Activated CD4-positive, alpha-beta memory T cell treated with anti-CD3 and anti-CD28 coated beads for 36 hours (primary cell): ENCODE measurements at regions of chr18 and their contacts with region 1.

Region 1: DNA sequence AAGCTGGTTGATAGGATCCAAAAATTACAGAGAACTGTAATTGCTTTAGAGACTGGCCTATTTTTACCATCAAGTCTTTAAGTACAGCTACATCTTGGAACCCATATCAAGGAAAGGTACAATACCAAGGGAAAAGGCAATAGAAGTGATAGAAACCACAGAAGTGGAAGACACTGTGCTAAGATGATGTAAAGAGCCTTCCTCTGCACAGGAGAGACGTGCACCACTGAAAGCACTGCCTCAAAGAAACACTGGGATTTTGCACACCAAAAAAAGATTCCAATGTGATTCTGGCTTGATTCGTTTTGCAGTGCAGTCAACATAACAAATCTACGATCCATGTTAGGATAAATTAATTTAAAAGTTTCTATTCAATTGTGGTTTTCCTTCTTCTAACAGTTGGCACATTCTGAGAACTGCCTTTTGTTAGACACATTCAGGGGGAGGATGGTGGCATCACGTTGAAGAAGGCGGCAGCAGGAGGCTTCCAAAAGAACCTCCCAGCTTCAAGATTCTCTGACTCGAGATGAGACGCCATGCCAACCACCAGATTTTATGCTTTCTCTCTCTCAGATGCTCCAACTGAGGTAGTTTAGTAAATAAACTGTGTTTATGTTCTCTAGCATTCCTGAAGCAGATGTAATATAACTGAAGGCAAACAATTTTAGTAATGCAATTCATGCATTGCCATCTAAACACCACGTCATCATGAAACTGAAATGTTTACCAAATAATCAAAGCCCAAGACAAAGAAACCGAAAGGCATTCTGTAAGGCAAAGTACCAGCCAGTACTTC is 102.9 kb downstream of the BCL2 start:
- DNase-seq: peak; percentile 50
- H3K4me3 Mint-ChIP-seq: peak overlapping the region; percentile 64
- H3K27ac Mint-ChIP-seq: peak overlapping the region; percentile 93
- H3K4me1 Mint-ChIP-seq: peaks cover 95% of the 10 kb centered on the region
- H3K27me3 Mint-ChIP-seq: no peaks in the 10 kb centered on the region

Region 2: GRCh38 chr18:62186774-62187542 is 1029.8 kb before region 1 on chr18 and contains the starts of genes PIGN and RELCH:
- CTCF ChIA-PET with region 1: no interaction called
- POLR2A ChIA-PET with region 1: no interaction called
- intact Hi-C with region 1: loop called (anchors 5 kb)
- DNase-seq: peak; percentile 97
- H3K4me3 Mint-ChIP-seq: peak within 1 kb of the TSS; percentile 99
- H3K27ac Mint-ChIP-seq: peak within 1 kb of the TSS; percentile 93
- H3K4me1 Mint-ChIP-seq: peaks cover 51% of the 10 kb centered on the region
- H3K27me3 Mint-ChIP-seq: no peaks in the 10 kb centered on the region
- total RNA-seq, gene PIGN: 26.2 to 27.8 TPM
- total RNA-seq, gene RELCH: 16.1 to 17.7 TPM

Region 3: DNA sequence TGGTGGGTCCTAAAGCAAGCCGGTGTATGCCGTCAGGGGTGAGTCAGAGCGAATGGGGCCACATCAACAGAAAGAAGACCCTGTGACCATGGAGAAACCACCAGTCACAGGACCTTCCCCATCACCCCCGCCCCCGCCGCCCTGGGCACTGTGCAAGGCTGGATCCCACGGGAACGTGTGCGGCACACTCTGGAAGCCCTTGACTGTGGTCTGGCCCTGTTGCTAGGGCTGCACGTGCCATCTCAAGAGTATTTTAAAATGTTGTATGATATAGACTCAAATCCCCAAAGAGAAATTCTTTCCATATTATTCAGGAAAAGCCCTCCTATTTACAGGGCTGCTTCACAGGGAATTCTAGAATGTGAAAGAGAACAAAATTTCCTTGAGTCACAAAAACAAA is 72.0 kb before region 1 on chr18:
- CTCF ChIA-PET with region 1: no interaction called
- POLR2A ChIA-PET with region 1: no interaction called
- intact Hi-C with region 1: no loop called
- DNase-seq: no peak
- H3K4me3 Mint-ChIP-seq: no peak overlapping the region
- H3K27ac Mint-ChIP-seq: no peak overlapping the region
- H3K4me1 Mint-ChIP-seq: peaks cover 52% of the 10 kb centered on the region
- H3K27me3 Mint-ChIP-seq: no peaks in the 10 kb centered on the region

Region 4: DNA sequence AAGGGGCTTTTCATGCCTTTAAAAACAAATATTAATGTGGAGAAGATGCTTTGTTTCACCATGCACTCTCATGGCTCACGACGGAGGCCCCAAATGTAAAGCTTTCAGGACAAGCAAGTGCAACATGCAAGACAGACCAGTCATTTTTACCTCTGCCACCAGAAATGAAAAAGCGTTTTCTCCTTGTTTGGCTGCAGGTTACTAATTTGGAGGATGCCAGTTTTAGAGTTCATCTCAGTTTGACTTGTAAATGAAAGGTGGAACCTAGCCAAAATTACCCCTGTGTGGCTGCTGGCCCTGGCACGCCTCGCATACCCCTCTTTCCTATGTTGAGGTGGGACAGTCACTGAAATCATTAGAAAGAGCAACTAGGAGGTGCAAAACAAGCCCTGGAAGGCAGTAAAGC is 35.7 kb before region 1 on chr18:
- CTCF ChIA-PET with region 1: no interaction called
- POLR2A ChIA-PET with region 1: no interaction called
- intact Hi-C with region 1: loop called (anchors 1 kb)
- DNase-seq: peak; percentile 73
- H3K4me3 Mint-ChIP-seq: no peak overlapping the region
- H3K27ac Mint-ChIP-seq: peak overlapping the region; percentile 78
- H3K4me1 Mint-ChIP-seq: peaks cover 81% of the 10 kb centered on the region
- H3K27me3 Mint-ChIP-seq: no peaks in the 10 kb centered on the region

Region 5: DNA sequence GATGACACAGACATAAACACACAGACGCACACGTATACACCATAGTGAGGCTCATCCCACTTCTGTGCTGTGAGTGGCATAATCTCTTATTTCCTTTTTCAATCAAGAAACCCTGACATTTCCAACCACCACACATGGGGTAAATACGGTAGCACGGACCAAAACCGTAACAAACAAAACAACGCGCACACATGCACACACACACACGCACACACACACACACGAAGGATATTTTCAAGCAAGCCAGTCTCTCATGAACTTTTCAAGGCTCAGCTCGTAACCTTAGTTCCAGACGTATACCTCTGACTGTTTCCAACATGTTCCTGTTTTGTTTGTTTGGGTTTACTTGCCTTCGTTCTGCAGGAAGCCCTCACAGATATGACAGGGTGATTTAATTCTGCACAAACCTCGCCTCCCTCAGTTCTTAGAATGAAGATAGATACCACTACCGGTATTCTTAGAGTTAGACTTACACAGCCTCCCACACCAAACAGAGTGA is 16.9 kb before region 1 on chr18:
- CTCF ChIA-PET with region 1: interaction called, 5 read pairs
- POLR2A ChIA-PET with region 1: interaction called, 5 read pairs
- intact Hi-C with region 1: loop called (anchors 1 kb)
- DNase-seq: peak; percentile 59
- H3K4me3 Mint-ChIP-seq: no peak overlapping the region
- H3K27ac Mint-ChIP-seq: no peak overlapping the region
- H3K4me1 Mint-ChIP-seq: peaks cover 41% of the 10 kb centered on the region
- H3K27me3 Mint-ChIP-seq: no peaks in the 10 kb centered on the region

Region 6: DNA sequence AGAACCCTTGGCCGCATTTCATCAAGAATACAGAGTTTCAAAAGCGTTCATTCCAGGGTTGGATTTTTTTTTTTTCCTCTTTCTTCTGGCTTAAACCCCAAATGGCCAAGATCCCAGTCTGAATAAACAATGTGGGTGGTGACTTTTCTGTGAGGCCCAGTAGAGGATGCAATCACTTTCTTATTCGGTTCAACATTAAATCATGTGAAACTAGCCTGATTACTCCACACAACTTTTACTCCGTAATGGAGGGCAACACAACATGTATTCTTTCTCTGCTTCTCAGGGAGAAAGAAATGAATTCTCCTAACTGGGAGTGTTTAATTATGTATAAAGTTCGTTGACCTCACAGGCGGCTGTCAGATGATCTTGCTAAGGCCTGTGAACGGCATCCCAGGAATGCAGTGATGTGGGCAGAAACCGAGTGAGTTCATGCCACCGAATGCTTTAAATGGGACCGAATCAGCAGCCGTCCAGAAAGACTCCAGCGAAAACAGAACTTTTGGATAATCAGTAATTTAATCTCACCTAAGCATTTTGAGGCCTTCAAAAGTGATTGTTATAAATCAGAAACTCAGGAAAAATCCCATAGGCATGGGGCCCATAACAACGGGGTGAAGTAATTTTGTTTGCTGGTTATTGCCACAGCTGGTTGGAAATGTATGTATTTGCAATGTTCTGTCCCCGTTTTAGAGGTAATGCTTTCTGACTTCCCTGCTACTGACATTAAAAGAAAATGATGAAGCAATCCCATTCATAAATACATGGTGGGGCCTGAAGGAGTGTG is 21.4 kb after region 1 on chr18:
- CTCF ChIA-PET with region 1: no interaction called
- POLR2A ChIA-PET with region 1: interaction called, 5 read pairs
- intact Hi-C with region 1: loop called (anchors 2 kb)
- DNase-seq: no peak
- H3K4me3 Mint-ChIP-seq: no peak overlapping the region
- H3K27ac Mint-ChIP-seq: no peak overlapping the region
- H3K4me1 Mint-ChIP-seq: peaks cover 62% of the 10 kb centered on the region
- H3K27me3 Mint-ChIP-seq: no peaks in the 10 kb centered on the region

Region 7: GRCh38 chr18:63253428-63254372 is 37.0 kb after region 1 on chr18:
- CTCF ChIA-PET with region 1: interaction called, 3 read pairs
- POLR2A ChIA-PET with region 1: interaction called, 3 read pairs
- intact Hi-C with region 1: loop called (anchors 1 kb)
- DNase-seq: no peak
- H3K4me3 Mint-ChIP-seq: no peak overlapping the region
- H3K27ac Mint-ChIP-seq: peak overlapping the region; percentile 62
- H3K4me1 Mint-ChIP-seq: peaks cover 74% of the 10 kb centered on the region
- H3K27me3 Mint-ChIP-seq: no peaks in the 10 kb centered on the region

Region 8: DNA sequence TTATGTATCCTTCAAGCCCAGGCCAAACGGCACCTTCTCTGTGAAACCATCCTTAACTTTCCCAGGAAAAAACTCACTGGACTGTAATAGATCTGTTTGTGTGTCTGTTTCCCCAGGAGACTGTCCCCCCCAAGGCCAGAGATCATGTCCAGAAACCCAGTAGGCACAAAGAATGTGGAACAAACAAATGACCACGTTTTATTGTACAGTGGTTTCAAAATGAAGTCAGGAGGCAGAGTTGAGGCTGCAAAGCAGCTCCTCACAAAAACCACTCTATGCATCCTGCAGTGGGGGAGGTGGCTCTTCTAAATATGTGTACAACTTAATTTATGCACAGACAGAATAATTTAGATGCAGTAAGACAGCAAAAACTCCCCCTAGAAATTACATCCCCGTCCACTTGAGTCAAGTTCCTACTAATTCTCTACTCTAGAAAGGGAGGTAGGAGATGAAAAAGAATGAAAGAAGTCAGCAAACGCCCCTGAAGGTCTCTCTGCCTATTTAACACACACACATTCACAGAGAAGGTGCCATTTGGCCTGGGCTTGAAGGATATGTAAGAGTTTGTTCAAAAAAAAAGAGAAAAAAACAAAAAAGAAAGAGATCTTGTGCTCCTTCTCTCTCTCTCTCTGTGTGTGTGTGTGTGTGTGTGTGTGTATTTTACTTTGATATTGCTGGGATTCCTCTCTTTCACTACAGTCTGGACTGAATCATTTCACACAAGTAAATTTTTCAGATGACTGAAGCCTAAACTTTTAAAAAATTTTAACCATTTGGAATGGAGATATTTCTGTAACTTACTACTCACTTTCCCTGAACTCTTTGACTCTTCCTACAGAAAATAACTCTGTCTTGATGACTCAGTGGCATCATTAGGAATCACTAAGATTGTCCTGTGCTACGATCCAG is 83.4 kb after region 1 on chr18:
- CTCF ChIA-PET with region 1: interaction called, 4 read pairs
- POLR2A ChIA-PET with region 1: interaction called, 7 read pairs
- intact Hi-C with region 1: loop called (anchors 1 kb)
- DNase-seq: peak; percentile 76
- H3K4me3 Mint-ChIP-seq: peak overlapping the region; percentile 45
- H3K27ac Mint-ChIP-seq: peak overlapping the region; percentile 93
- H3K4me1 Mint-ChIP-seq: peaks cover 86% of the 10 kb centered on the region
- H3K27me3 Mint-ChIP-seq: no peaks in the 10 kb centered on the region